ENCODE measurements at regions of chr19 and their contacts with region 1.

Region 1: GRCh38 chr19:50329146-50329925 is at the start of gene KCNC3:
- DNase-seq: peak; percentile 100
- H3K4me3 ChIP-seq: peak within 1 kb of the TSS; percentile 47 to 83 (median 52)
- H3K4me3 Mint-ChIP-seq: peak within 1 kb of the TSS; percentile 76 to 90
- H3K27ac ChIP-seq: peak within 1 kb of the TSS; percentile 33 to 70
- H3K27ac Mint-ChIP-seq: peak within 1 kb of the TSS; percentile 86 to 96 (median 94)
- H3K4me1 ChIP-seq: peaks cover 70 to 83% of the 10 kb centered on the region in 2 donors
- H3K4me1 Mint-ChIP-seq: peaks cover 66% of the 10 kb centered on the region
- H3K27me3 ChIP-seq: peaks cover 19 to 26% of the 10 kb centered on the region in 2 donors
- H3K27me3 Mint-ChIP-seq: peaks cover 33 to 44% (median 39%) of the 10 kb centered on the region in 3 donors
- CTCF ChIP-seq: no peak
- polyA plus RNA-seq, gene KCNC3: 0.04 to 23.6 TPM in 2 of 3 donors, not detected in the other

Region 2: DNA sequence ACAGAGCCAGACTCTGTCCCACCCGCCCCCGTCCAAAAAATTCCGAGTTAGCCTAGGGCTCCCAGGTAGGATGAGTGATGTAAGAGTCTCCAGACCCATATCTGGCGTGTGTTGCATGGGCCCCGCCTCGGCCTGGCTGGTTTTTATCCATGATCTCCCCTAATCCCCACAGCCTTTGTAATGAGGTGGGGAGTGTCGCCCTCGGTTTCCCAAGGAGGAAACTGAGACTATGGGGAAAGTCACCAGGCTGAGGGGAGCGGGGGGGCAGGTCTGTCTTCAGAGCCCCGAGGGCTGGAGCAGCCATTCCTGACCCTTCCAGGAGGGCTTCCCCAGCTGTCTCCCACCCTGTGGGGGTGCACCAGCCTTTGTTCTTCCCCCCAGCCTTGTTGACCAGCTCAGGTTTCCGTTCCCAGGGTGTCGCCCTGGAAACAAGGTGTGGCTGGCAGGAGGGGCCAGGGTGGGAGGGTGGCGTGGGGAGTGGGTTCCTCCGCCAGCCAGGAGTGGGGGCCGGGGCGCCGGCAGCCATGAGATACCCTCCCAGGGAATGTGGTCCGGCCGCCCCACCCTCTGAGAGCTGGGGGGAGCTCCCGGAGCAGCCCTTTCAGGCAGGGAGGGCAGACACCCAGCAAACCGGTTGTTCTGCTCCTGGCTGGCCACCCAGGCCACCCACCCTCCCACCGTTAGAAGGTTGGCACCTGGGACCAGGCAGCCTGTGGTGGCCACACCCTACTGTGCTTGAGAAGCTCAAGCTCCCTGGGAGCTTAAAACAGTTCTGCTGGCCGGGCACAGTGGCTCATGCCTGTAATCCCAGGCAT is 114.4 kb before region 1 on chr19:
- intact Hi-C with region 1: no loop called
- DNase-seq: no peak
- H3K4me3 ChIP-seq: no peak overlapping the region
- H3K4me3 Mint-ChIP-seq: no peak overlapping the region
- H3K27ac ChIP-seq: no peak overlapping the region
- H3K27ac Mint-ChIP-seq: no peak overlapping the region
- H3K4me1 ChIP-seq: no peaks in the 10 kb centered on the region
- H3K4me1 Mint-ChIP-seq: no peaks in the 10 kb centered on the region
- H3K27me3 ChIP-seq: peaks cover 0 to 12% of the 10 kb centered on the region in 2 donors
- H3K27me3 Mint-ChIP-seq: peaks cover 24 to 36% (median 25%) of the 10 kb centered on the region in 3 donors
- CTCF ChIP-seq: no peak

Region 3: DNA sequence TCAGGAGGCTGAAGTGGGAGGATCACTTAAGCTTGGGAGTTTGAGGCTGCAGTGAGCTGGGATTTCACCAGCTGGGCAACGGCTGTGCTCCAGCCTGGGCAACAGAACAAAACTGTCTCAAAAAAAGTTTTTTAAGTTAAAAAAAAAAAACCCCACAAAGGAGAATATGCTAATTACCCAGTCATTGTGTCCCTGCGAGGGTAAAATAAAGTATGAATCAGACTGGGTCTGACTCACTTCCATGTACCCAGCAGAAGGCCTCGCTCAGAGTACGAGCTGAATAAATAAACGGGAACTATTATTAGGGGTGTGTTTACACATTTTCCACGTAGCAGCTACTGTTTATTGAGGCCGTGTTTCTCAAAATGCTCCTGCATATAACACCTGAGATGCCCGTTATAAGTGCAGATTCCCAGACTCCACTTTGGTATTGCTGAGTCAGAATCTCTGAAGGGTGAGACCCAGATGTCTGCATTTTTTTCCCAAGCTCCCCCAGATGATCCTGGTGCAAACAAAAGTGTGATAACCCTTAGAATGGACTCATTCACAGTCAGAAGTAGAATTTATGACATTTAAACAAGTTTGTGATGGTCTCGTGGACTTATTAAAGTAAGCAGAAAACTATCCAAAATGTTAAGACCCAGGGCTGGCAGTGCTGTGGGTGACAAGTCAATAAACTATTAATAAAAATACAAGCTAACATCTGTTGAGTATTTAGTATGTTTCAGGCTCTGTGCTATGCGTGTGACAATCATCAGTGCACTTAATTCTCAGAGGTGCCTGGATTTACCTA is 28.3 kb before region 1 on chr19:
- intact Hi-C with region 1: no loop called
- DNase-seq: peak; percentile 6 to 44 (median 11)
- H3K4me3 ChIP-seq: no peak overlapping the region
- H3K4me3 Mint-ChIP-seq: no peak overlapping the region
- H3K27ac ChIP-seq: no peak overlapping the region
- H3K27ac Mint-ChIP-seq: peak overlapping the region in 2 of 7 donors; percentile 18 to 25
- H3K4me1 ChIP-seq: no peaks in the 10 kb centered on the region
- H3K4me1 Mint-ChIP-seq: no peaks in the 10 kb centered on the region
- H3K27me3 ChIP-seq: no peaks in the 10 kb centered on the region
- H3K27me3 Mint-ChIP-seq: peaks cover 13 to 29% (median 21%) of the 10 kb centered on the region in 3 donors
- CTCF ChIP-seq: no peak

Region 4: GRCh38 chr19:50341091-50341564 is 11.8 kb after region 1 on chr19:
- intact Hi-C with region 1: loop called in 1 of 2 experiments (anchors 1 kb)
- DNase-seq: peak; percentile 80 to 88 (median 85)
- H3K4me3 ChIP-seq: peak overlapping the region in 2 of 3 experiments; percentile 20 to 88
- H3K4me3 Mint-ChIP-seq: peak overlapping the region; percentile 43 to 62
- H3K27ac ChIP-seq: peak overlapping the region; percentile 70 to 87
- H3K27ac Mint-ChIP-seq: peak overlapping the region; percentile 85 to 94 (median 91)
- H3K4me1 ChIP-seq: peaks cover 97 to 100% of the 10 kb centered on the region in 2 donors
- H3K4me1 Mint-ChIP-seq: peaks cover 69% of the 10 kb centered on the region
- H3K27me3 ChIP-seq: no peaks in the 10 kb centered on the region
- H3K27me3 Mint-ChIP-seq: peaks cover 0 to 3% (median 1%) of the 10 kb centered on the region in 3 donors
- CTCF ChIP-seq: no peak

Region 5: GRCh38 chr19:50349277-50350057 is 20.1 kb after region 1 on chr19:
- intact Hi-C with region 1: loop called in 1 of 2 experiments (anchors 2 kb)
- DNase-seq: no peak
- H3K4me3 ChIP-seq: no peak overlapping the region
- H3K4me3 Mint-ChIP-seq: no peak overlapping the region
- H3K27ac ChIP-seq: no peak overlapping the region
- H3K27ac Mint-ChIP-seq: no peak overlapping the region
- H3K4me1 ChIP-seq: peaks cover 38 to 39% of the 10 kb centered on the region in 2 donors
- H3K4me1 Mint-ChIP-seq: peaks cover 36% of the 10 kb centered on the region
- H3K27me3 ChIP-seq: no peaks in the 10 kb centered on the region
- H3K27me3 Mint-ChIP-seq: peaks cover 0 to 4% (median 2%) of the 10 kb centered on the region in 3 donors
- CTCF ChIP-seq: no peak

Region 6: DNA sequence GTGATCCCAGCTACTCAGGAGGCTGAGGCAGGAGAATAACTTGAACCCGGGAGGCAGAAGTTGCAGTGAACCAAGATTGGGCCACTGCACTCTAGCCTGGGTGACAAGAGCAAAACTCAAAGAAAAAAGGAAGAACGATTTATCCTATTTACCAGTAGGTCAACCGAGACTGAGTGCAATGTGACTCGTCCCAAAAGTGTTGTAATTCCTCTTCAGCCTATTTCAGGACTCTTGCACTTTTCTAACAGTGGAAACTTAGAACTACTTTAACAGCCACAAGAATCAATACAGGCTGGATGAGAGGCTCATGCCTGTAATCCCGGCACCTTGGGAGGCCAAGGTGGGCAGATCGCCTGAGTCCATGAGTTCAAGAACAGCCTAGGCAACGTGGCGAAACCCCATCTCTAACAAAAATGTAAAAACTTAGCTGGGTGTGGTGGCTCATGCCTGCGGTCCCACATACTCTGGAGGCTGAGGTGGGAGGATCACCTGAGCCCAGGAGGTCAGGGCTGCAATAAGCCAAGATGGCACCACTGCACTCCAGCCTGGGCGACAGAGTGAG is 42.7 kb after region 1 on chr19:
- intact Hi-C with region 1: no loop called
- DNase-seq: peak in 2 of 3 donors; percentile 51 to 60
- H3K4me3 ChIP-seq: no peak overlapping the region
- H3K4me3 Mint-ChIP-seq: no peak overlapping the region
- H3K27ac ChIP-seq: peak overlapping the region; percentile 64
- H3K27ac Mint-ChIP-seq: peak overlapping the region; percentile 31 to 91 (median 82)
- H3K4me1 ChIP-seq: peaks cover 32 to 38% of the 10 kb centered on the region in 2 donors
- H3K4me1 Mint-ChIP-seq: peaks cover 25% of the 10 kb centered on the region
- H3K27me3 ChIP-seq: no peaks in the 10 kb centered on the region
- H3K27me3 Mint-ChIP-seq: peaks cover 0 to 5% (median 2%) of the 10 kb centered on the region in 3 donors
- CTCF ChIP-seq: no peak

Region 7: GRCh38 chr19:50383852-50384684 is 54.7 kb after region 1 on chr19 and contains the start of gene POLD1:
- intact Hi-C with region 1: loop called in 1 of 2 experiments (anchors 1 kb)
- DNase-seq: peak; percentile 98 to 99 (median 98)
- H3K4me3 ChIP-seq: peak within 1 kb of the TSS; percentile 45 to 86 (median 48)
- H3K4me3 Mint-ChIP-seq: peak within 1 kb of the TSS; percentile 82 to 95
- H3K27ac ChIP-seq: peak within 1 kb of the TSS; percentile 61 to 71
- H3K27ac Mint-ChIP-seq: peak within 1 kb of the TSS; percentile 91 to 98 (median 96)
- H3K4me1 ChIP-seq: peaks cover 48 to 60% of the 10 kb centered on the region in 2 donors
- H3K4me1 Mint-ChIP-seq: peaks cover 52% of the 10 kb centered on the region
- H3K27me3 ChIP-seq: no peaks in the 10 kb centered on the region
- H3K27me3 Mint-ChIP-seq: peaks cover 0 to 5% (median 3%) of the 10 kb centered on the region in 3 donors
- CTCF ChIP-seq: no peak
- polyA plus RNA-seq, gene POLD1: 9.3 to 22.4 (median 15.6) TPM

Region 8: DNA sequence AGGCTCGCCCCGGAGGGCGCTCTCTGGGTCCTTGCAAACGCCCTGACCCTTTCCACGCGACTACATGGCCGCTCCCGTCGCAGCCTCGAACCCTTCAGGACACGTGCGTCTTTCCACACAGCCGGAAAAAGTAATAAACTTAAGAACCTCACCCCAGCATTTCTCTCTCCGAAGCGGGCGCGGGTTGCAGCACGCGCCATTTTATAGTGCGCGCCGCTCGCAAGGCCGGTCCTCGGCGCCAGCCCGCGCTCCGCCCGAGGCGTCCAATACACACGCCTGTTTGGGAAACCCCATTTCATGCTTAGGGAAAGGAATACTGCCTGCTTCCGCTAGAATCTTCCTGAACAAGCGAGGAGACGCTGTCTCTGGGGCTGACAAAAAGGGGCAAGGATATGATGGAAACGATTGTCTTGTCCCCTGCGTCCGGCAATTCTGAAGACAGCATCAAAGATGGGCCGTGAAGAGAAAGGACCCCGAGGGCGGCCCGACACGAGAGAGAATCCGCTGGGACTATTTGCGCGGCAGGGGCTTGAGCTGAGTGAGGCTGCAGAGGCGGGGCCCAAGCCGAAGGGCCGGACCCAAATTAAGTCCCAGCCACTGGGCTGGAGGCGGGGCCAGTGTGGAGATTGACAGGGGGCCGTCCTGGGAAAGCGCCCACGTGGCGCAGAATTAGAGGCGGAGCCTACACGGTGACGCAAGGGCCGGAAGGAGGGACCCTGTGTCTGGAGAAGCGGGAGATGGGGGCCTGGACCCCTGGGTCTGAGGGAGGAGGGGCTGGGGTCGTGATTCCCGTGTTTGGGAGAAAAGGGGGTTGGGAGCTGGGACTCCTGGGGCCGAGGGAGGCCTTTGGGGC is 475.3 kb after region 1 on chr19:
- intact Hi-C with region 1: loop called (anchors 5 to 10 kb)
- DNase-seq: peak; percentile 93 to 96 (median 96)
- H3K4me3 ChIP-seq: peak overlapping the region; percentile 69 to 99 (median 69)
- H3K4me3 Mint-ChIP-seq: peak overlapping the region; percentile 98 to 100
- H3K27ac ChIP-seq: peak overlapping the region; percentile 90 to 98
- H3K27ac Mint-ChIP-seq: peak overlapping the region; percentile 99 to 100 (median 100)
- H3K4me1 ChIP-seq: peaks cover 18 to 20% of the 10 kb centered on the region in 2 donors
- H3K4me1 Mint-ChIP-seq: peaks cover 22% of the 10 kb centered on the region
- H3K27me3 ChIP-seq: no peaks in the 10 kb centered on the region
- H3K27me3 Mint-ChIP-seq: peaks cover 4 to 5% (median 5%) of the 10 kb centered on the region in 3 donors
- CTCF ChIP-seq: no peak